ENCODE measurements at regions of chr16 and their contacts with region 1.

Region 1: DNA sequence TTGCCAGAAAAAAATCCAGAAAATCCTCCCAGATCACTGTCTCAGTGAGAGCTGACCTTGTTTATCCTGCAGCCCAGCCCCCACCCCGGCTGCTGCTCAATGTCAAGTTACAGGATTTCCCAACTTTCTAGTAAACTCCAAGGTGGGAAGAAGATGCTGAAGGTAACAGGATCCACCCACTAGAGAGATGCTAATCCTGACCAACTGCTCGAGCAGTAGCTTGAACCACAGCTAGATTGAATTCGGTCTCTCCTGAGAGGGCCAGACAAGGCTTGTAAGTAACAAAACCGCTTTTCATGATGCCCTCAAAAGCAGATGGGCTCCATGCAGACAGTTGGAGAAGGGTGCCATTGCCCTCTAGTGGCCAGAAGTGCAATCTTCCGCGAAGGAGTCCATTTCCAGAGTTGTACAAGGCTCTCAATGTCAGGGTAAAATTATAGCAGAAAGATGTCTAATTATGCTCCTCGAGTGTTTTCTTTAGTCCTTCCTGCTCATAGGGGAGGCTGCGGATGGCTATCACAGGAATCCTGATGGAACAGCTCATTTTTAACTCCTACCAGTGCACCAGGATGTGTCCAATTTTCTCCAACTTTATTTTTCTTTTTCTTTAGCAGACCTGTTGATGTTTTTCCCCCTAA is 3.9 kb downstream of the CDH11 start:
- DNase-seq: peak; percentile 53 to 72
- ATAC-seq: peak in 7 of 8 donors; percentile 35 to 70 (median 64)
- H3K4me3 ChIP-seq: no peak overlapping the region
- H3K27ac ChIP-seq: no peak overlapping the region
- H3K4me1 ChIP-seq: peaks cover 0 to 33% (median 9%) of the 10 kb centered on the region in 9 donors
- H3K27me3 ChIP-seq: peaks cover 0 to 41% (median 16%) of the 10 kb centered on the region in 7 donors
- CTCF ChIP-seq: peak; percentile 75 to 93 (median 90)

Region 2: GRCh38 chr16:63461248-63461841 is 1656.6 kb before region 1 on chr16:
- intact Hi-C with region 1: loop called in 3 of 10 experiments (anchors 5 to 10 kb)
- DNase-seq: no peak
- ATAC-seq: peak in 4 of 8 donors; percentile 46 to 60 (median 52)
- H3K4me3 ChIP-seq: no peak overlapping the region
- H3K27ac ChIP-seq: no peak overlapping the region
- H3K4me1 ChIP-seq: peaks cover 0 to 4% (median 0%) of the 10 kb centered on the region in 9 donors
- H3K27me3 ChIP-seq: no peaks in the 10 kb centered on the region
- CTCF ChIP-seq: peak in 7 of 9 donors; percentile 18 to 64 (median 55)

Region 3: GRCh38 chr16:64455254-64455653 is 662.7 kb before region 1 on chr16:
- intact Hi-C with region 1: loop called in 1 of 10 experiments (anchors 5 kb)
- DNase-seq: no peak
- ATAC-seq: no peak
- H3K4me3 ChIP-seq: no peak overlapping the region
- H3K27ac ChIP-seq: no peak overlapping the region
- H3K4me1 ChIP-seq: peaks cover 0 to 6% (median 0%) of the 10 kb centered on the region in 9 donors
- H3K27me3 ChIP-seq: no peaks in the 10 kb centered on the region
- CTCF ChIP-seq: peak in 7 of 9 donors; percentile 10 to 60 (median 43)

Region 4: DNA sequence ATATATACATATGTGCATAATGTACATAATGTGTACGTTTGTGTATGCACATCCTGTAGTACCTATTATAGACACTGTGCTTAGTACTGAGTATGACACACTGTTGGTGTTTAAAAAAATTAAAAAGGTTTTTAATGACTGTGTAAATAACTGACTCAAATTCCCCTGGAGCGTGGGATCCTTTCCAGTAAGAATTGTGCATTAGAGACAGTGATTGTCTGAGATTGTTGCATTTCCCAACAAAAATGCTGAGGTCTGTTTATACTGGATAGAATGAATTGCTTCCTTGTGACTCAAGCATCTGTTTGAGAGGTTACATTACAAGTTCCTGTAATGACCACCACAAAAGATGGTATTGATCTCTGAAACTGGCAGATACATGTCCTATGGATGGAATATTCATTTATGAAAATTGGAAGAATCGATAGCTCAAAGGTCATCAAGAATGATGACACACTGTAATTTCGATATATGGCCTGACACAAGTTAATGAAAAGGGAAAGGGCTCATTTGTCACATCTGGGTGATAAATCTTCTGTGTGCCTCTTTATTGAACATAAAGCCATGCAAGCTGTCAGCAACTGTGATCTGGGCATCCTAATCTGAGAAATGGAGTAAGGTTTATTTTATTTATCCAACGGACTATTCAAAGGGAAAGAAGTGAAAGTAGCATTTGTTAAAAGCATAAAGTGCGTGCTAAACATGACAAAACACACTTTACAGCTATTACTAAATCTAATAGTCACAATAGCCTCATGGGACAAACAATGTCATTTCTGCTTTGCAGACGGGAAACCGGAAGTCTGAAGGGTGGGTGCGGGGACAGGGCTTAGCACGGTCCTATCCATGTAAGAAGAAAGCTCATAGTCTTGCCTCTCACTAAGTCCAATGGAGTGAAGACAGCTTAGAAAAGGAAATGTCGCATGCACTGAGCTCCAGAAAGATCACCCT is 224.8 kb before region 1 on chr16:
- intact Hi-C with region 1: loop called in 1 of 10 experiments (anchors 10 kb)
- DNase-seq: peak in 1 of 2 donors; percentile 18
- ATAC-seq: peak in 3 of 8 donors; percentile 29 to 46 (median 31)
- H3K4me3 ChIP-seq: peak overlapping the region in 1 of 10 donors; percentile 11
- H3K27ac ChIP-seq: peak overlapping the region in 1 of 10 donors; percentile 35
- H3K4me1 ChIP-seq: peaks cover 0 to 5% (median 0%) of the 10 kb centered on the region in 9 donors
- H3K27me3 ChIP-seq: no peaks in the 10 kb centered on the region
- CTCF ChIP-seq: no peak

Region 5: DNA sequence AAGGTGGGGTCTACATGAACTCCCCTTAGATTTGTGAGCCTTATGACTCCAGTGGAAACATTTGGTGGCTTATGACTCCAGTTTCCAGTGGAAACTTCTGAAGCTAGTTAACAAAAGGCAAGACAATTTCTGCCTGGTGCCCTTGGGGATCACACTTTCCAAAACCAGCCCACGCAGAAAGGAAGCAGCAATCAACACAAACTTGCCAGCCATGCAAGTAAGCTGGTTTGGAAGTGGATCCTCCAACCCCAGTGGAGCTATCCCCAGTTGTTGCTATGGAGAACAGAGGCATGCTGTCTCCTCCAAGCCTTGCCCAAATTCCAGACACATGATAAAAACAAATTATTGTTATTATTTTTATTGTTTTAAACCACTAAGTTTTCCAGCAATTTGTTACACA is 126.9 kb before region 1 on chr16:
- intact Hi-C with region 1: no loop called
- DNase-seq: peak in 1 of 2 donors; percentile 31
- ATAC-seq: peak in 4 of 8 donors; percentile 33 to 65 (median 52)
- H3K4me3 ChIP-seq: no peak overlapping the region
- H3K27ac ChIP-seq: no peak overlapping the region
- H3K4me1 ChIP-seq: no peaks in the 10 kb centered on the region
- H3K27me3 ChIP-seq: no peaks in the 10 kb centered on the region
- CTCF ChIP-seq: no peak

Region 6: DNA sequence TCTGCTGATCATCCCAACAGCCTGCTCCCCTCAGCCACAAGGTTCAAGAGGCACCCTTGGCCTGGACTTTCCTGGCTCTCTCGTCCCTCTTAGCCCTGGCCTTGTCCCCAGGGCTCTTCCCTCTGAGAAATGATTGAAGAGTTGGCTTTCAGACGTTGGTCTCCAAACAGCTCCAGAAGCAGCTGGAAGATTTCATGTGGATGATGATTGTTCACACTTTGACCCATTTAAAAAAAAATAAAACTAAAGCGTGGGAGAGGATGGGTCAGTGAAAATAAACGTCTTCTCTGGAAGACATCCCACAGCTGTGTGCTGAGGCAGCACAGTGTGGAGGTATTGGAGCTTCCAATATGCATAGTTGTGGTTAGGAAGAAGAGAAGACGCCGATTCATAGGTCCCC is 58.7 kb after region 1 on chr16:
- intact Hi-C with region 1: loop called in 2 of 10 experiments (anchors 5 kb)
- DNase-seq: peak; percentile 38 to 51
- ATAC-seq: peak; percentile 67 to 93 (median 84)
- H3K4me3 ChIP-seq: no peak overlapping the region
- H3K27ac ChIP-seq: no peak overlapping the region
- H3K4me1 ChIP-seq: peaks cover 0 to 24% (median 0%) of the 10 kb centered on the region in 9 donors
- H3K27me3 ChIP-seq: no peaks in the 10 kb centered on the region
- CTCF ChIP-seq: no peak

Region 7: DNA sequence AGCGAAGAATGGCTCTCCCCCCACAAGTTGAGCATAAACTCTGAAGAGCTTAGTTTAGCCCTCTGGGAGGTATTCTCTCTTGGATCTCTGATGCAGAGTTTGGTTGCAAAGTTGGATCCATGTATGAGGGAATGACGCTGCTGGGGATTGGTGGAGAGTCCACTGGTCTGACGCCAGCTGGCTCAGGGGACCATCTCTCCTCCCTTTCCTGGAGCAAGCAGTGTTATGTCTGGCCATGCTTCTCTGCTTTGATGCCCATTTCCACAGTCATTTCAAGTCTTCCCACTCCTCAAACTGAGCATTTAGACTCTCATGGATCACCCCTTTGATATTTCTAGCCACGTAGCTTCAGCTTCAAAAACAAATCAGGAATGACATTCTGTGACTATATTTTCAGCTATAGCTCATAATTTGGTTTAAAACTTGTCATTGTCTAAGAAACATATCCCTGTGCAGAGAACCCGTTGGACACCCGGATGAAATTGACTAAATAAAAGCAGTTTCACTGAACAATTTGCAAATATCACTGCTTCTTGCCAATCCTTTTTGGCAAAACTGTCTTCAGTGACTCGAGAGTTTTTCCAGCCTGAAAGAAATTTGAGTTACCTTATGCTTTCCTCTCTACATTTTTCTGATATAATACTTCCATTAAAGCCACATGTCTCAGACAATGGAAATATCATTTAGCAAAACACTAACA is 197.3 kb after region 1 on chr16:
- intact Hi-C with region 1: loop called in 1 of 10 experiments (anchors 10 kb)
- DNase-seq: peak; percentile 69 to 74
- ATAC-seq: peak; percentile 62 to 92 (median 82)
- H3K4me3 ChIP-seq: no peak overlapping the region
- H3K27ac ChIP-seq: no peak overlapping the region
- H3K4me1 ChIP-seq: peaks cover 0 to 26% (median 0%) of the 10 kb centered on the region in 9 donors
- H3K27me3 ChIP-seq: no peaks in the 10 kb centered on the region
- CTCF ChIP-seq: no peak

Region 8: DNA sequence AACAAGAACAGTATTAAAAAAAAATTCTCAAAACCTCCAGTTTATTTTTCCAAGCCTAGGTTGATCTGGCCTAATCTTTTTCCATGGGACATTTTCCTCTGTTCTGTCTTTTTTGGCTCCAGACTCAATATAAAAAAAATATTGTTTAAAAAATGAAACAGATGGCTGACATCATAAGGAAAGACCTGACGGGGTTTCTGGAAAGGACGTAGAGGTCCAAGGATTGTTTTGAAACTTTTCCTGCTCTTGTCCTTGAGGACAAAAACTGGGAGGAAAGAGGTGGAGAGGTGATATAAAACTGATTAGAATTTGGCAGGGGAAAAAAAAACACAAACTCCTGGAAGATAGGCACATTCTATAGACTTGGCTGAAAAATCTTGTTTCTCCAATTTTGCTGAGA is 215.4 kb after region 1 on chr16:
- intact Hi-C with region 1: no loop called
- DNase-seq: no peak
- ATAC-seq: no peak
- H3K4me3 ChIP-seq: no peak overlapping the region
- H3K27ac ChIP-seq: no peak overlapping the region
- H3K4me1 ChIP-seq: no peaks in the 10 kb centered on the region
- H3K27me3 ChIP-seq: peaks cover 0 to 4% (median 0%) of the 10 kb centered on the region in 7 donors
- CTCF ChIP-seq: no peak